ENCODE measurements at regions of chr1 and their contacts with region 1.

Region 1: DNA sequence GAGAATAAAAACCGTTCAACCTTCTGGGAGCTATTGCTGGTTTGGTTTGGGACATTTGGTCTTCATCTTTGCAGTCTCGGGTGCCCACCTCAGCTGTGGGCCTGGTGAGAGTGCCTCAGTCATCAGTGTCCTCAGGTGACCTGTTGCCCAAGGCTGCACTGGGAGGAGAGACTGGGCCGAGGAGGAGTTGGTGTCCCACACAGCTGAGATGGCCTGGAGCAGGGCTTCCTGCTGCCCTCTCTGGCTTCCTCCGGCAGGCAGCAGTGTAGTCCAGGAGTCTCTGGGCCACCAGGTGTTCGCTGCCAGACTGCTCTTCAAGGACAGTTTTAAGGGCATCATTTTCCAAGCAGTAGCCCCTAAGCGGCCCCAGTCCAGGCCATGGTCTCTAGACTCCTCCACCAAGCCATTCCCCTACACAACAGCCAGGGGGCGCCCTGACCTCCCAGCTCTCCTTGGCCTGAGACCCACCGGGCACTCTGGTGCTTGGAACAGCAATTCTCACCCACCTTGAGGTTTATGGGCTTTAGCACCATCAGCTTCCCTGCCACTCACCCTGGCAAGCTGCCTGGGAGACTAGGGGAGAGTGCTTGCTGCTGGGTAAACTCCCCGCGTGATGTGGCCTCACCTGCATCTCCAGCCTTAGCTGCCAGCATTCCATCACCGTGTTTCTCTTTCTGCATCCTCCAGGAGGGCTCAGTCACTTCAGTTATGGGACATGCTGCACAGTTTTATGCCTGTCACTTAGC is 9.1 kb upstream of the SYTL1 start:
- DNase-seq: peak; percentile 73
- ATAC-seq: peak; percentile 90
- H3K4me3 ChIP-seq: no peak overlapping the region
- H3K4me3 Mint-ChIP-seq: no peak overlapping the region
- H3K27ac ChIP-seq: no peak overlapping the region
- H3K27ac Mint-ChIP-seq: peak overlapping the region; percentile 15
- H3K4me1 ChIP-seq: peaks cover 11 to 24% of the 10 kb centered on the region in 2 donors
- H3K4me1 Mint-ChIP-seq: peaks cover 38% of the 10 kb centered on the region
- H3K27me3 ChIP-seq: no peaks in the 10 kb centered on the region
- H3K27me3 Mint-ChIP-seq: no peaks in the 10 kb centered on the region
- CTCF ChIP-seq: peak; percentile 87

Region 2: DNA sequence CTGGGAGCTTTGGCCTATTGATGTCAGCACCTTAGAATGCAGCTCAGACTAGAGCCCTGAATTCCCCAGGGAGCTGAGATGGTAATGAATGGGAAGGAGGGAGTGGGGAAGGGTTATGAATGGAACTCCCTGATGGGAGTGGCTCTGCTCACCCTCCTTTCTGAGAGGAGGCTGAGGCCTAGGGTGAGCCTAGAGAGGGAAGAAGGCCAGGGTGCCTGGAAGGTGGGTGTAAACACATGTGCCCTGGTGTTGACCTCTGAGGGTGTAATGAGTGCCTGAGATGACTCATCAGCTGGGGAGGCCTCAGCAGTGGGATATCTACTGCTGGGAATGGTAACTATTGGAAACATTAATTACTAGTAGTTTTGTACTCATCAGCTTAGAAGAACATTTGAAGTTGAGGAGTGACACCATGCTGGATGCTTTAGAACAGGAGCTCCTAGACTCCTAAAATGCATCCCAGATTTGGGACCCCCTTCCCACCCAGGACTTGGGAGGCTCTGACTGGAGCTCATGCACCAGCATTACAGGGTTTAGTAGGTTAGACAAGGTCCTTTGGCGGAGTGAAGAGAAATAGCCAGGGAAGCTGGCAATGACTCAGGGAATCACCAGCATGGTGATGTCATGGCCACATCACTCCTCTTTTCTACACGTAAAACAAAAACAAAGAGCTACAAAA is 560.9 kb before region 1 on chr1:
- CTCF ChIA-PET with region 1: no interaction called
- POLR2A ChIA-PET with region 1: no interaction called
- intact Hi-C with region 1: no loop called
- DNase-seq: no peak
- ATAC-seq: no peak
- H3K4me3 ChIP-seq: no peak overlapping the region
- H3K4me3 Mint-ChIP-seq: no peak overlapping the region
- H3K27ac ChIP-seq: peak overlapping the region in 1 of 2 donors; percentile 46
- H3K27ac Mint-ChIP-seq: peak overlapping the region; percentile 65
- H3K4me1 ChIP-seq: no peaks in the 10 kb centered on the region
- H3K4me1 Mint-ChIP-seq: no peaks in the 10 kb centered on the region
- H3K27me3 ChIP-seq: no peaks in the 10 kb centered on the region
- H3K27me3 Mint-ChIP-seq: no peaks in the 10 kb centered on the region
- CTCF ChIP-seq: no peak

Region 3: DNA sequence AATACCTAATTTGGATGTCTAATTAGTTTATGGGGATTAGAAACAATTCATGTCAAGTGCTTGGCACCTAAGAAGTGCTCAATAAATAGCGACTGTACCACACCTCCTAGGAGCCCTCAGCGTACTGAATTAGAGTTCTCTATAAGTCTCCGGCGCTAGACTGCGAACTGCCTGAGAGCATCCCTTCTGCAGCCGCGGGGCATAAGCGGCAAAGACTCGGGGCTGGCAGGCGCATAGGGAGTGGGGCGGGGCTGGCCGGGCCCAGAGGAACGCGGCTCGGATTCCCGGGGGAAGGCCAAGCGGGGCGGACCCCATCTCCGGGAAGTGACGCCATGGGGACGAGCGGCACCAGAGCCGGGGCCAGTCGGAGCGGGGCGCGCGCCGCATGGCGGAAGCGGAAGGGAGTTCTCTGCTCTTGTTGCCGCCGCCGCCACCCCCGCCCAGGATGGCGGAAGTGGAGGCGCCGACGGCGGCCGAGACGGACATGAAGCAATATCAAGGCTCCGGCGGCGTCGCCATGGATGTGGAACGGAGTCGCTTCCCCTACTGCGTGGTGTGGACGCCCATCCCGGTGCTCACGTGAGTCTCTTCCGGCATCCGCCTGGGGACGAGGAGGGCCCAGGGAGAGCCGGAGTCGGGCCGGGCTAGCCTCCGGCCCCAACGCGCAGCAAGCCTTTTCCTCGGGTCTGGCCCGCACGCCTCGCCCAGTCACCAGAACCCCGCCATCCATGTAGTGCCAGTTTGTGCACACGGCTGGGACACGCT is 10.7 kb before region 1 on chr1 and contains the start of gene TMEM222:
- CTCF ChIA-PET with region 1: interaction called, 27 read pairs
- POLR2A ChIA-PET with region 1: interaction called, 4 read pairs
- intact Hi-C with region 1: no loop called
- DNase-seq: peak; percentile 98
- ATAC-seq: peak; percentile 96
- H3K4me3 ChIP-seq: peak within 1 kb of the TSS; percentile 80 to 100 (median 98)
- H3K4me3 Mint-ChIP-seq: peak within 1 kb of the TSS; percentile 98
- H3K27ac ChIP-seq: peak within 1 kb of the TSS; percentile 94
- H3K27ac Mint-ChIP-seq: peak within 1 kb of the TSS; percentile 97
- H3K4me1 ChIP-seq: peaks cover 17 to 25% of the 10 kb centered on the region in 2 donors
- H3K4me1 Mint-ChIP-seq: peaks cover 51% of the 10 kb centered on the region
- H3K27me3 ChIP-seq: no peaks in the 10 kb centered on the region
- H3K27me3 Mint-ChIP-seq: peaks cover 12% of the 10 kb centered on the region
- CTCF ChIP-seq: no peak
- total RNA-seq, gene TMEM222: 44.2 and 48.7 TPM in 2 replicates

Region 4: DNA sequence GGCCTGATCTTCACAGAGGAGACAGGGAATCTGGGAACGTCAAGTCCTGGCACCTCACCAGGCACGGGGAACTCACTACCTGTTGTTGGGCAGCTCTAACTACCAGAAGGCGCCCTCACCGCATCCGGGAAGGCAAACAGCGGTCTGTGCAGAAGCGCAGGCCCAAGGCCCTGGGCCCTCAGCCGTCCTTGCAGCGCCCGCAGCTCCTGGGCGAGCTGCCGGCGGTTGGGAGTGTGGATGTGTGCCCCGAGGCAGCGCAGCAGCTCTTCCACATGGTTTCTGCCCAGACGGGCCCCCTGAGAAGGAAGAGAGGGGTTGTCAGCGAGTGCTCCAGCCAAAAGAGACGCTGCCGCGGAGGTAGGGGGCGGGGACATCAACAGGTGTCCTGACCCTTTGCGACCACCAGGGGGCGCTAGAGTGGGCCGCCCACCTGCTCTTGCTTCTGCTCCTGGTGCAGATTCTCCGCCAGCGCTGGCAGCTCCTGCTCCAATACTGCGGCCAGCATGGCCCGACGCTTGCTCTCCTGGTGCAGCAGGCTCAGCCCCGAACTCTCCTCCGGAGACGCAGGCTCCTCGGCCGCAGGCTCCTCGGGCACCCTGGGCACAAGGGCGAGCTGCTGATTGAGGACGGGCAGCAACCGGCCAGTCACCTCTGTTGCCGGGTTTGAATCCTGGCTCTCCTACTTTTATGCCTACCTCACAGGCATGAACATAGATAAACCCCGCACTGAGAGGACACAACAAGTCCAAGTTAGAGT is 24.8 kb after region 1 on chr1:
- CTCF ChIA-PET with region 1: interaction called, 132 read pairs
- POLR2A ChIA-PET with region 1: no interaction called
- intact Hi-C with region 1: loop called (anchors 2 kb)
- DNase-seq: peak; percentile 90
- ATAC-seq: peak; percentile 71
- H3K4me3 ChIP-seq: peak overlapping the region; percentile 21 to 63 (median 54)
- H3K4me3 Mint-ChIP-seq: peak overlapping the region; percentile 84
- H3K27ac ChIP-seq: peak overlapping the region; percentile 19 to 34
- H3K27ac Mint-ChIP-seq: peak overlapping the region; percentile 75
- H3K4me1 ChIP-seq: peaks cover 36 to 54% of the 10 kb centered on the region in 2 donors
- H3K4me1 Mint-ChIP-seq: peaks cover 48% of the 10 kb centered on the region
- H3K27me3 ChIP-seq: no peaks in the 10 kb centered on the region
- H3K27me3 Mint-ChIP-seq: no peaks in the 10 kb centered on the region
- CTCF ChIP-seq: peak; percentile 98

Region 5: DNA sequence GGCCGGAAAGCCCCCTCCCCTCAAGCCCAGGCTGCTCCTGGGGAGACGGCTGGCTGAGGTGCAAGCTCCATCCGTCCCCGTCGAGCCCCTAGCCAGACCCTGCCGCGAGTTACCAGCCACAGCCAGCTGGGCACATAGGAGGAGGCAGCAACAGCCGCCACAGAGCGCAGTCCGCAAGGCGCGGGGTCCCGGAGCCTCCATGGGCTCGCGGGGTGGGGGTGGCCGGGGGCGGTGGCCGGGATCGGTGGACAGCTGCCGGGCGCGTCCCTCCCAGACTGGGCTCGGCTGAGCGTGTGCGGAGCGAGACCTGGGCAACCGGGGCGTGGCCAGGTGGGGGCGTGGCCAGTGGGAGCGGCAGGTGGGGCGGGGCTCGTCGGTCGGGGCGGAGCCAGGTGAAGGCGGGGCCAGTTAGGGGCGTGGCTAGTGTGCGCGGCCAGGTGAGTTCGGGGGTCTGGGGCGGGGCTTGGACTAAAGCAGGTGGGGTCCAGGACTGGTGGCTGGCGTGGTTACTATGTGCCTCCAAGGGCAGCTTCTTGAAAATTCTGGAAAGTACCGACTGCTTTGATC is 50.4 kb after region 1 on chr1 and contains the start of gene CD164L2:
- CTCF ChIA-PET with region 1: interaction called, 96 read pairs
- POLR2A ChIA-PET with region 1: no interaction called
- intact Hi-C with region 1: loop called (anchors 1 kb)
- DNase-seq: no peak
- ATAC-seq: peak; percentile 72
- H3K4me3 ChIP-seq: no peak within 1 kb of the TSS
- H3K4me3 Mint-ChIP-seq: no peak within 1 kb of the TSS
- H3K27ac ChIP-seq: no peak within 1 kb of the TSS
- H3K27ac Mint-ChIP-seq: no peak within 1 kb of the TSS
- H3K4me1 ChIP-seq: peaks cover 8 to 12% of the 10 kb centered on the region in 2 donors
- H3K4me1 Mint-ChIP-seq: peaks cover 8% of the 10 kb centered on the region
- H3K27me3 ChIP-seq: no peaks in the 10 kb centered on the region
- H3K27me3 Mint-ChIP-seq: peaks cover 4% of the 10 kb centered on the region
- CTCF ChIP-seq: no peak
- total RNA-seq, gene CD164L2: not detected in 2 replicates

Region 6: GRCh38 chr1:27402349-27402754 is 69.6 kb after region 1 on chr1:
- CTCF ChIA-PET with region 1: interaction called, 18 read pairs
- POLR2A ChIA-PET with region 1: no interaction called
- intact Hi-C with region 1: no loop called
- DNase-seq: peak; percentile 54
- ATAC-seq: no peak
- H3K4me3 ChIP-seq: no peak overlapping the region
- H3K4me3 Mint-ChIP-seq: peak overlapping the region; percentile 72
- H3K27ac ChIP-seq: peak overlapping the region; percentile 49 to 79
- H3K27ac Mint-ChIP-seq: peak overlapping the region; percentile 89
- H3K4me1 ChIP-seq: peaks cover 41 to 59% of the 10 kb centered on the region in 2 donors
- H3K4me1 Mint-ChIP-seq: peaks cover 58% of the 10 kb centered on the region
- H3K27me3 ChIP-seq: no peaks in the 10 kb centered on the region
- H3K27me3 Mint-ChIP-seq: no peaks in the 10 kb centered on the region
- CTCF ChIP-seq: no peak